A673 (cell line): ENCODE measurements at regions of chr14 and their contacts with region 1.

Region 1: GRCh38 chr14:49633640-49634546 is 1.2 kb downstream of the DNAAF2 start:
- DNase-seq: peak; percentile 98
- H3K4me3 ChIP-seq: peak overlapping the region; percentile 95
- H3K27ac ChIP-seq: peak overlapping the region; percentile 96
- H3K4me1 ChIP-seq: peaks cover 14% of the 10 kb centered on the region
- H3K27me3 ChIP-seq: no peaks in the 10 kb centered on the region
- CTCF ChIP-seq: peak; percentile 99

Region 2: DNA sequence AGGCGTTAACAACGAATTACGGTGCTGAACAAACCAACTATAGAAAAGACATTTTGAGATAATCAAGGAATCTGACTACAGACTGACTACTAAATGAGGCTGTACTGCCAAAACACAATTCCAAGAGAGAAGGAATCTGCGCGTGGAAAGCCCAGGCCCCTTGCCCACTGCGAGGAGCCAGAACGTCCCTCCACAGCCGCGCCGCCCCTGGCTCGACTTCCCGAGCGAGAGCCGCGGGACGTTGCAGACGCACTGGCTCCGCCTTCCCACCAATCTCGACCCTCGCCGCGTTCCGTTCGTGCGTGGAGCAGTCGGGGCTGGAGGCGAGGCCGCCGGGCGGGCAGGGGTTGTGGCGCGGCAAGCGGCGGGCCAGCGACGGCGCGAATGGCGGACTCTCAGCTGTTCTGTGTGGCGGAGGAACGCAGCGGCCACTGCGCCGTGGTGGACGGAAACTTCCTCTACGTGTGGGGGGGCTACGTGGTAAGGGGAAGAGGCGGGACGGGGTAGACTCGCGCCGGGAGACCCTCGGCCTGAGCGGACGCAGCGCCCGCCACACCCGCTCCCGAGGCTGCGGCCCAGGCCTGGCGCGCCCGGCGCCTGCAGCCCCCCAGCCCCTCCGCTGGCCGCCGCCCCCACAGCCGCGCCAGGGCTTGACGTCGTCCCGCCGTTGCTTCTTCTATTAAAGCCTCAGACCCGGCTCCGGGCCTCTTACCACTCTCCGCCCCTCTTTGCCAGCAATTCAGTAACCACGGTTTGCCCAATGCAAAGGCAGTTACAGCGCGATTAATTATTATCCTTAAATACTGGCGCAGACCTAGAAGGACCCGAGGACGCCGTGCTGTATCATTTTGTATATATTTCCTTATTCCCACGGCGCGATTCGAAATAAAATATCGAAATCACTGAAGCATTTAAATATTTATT is 59.2 kb after region 1 on chr14 and contains the start of gene KLHDC1:
- CTCF ChIA-PET with region 1: no interaction called
- POLR2A ChIA-PET with region 1: no interaction called
- intact Hi-C with region 1: loop called (anchors 2 kb)
- DNase-seq: peak; percentile 88
- H3K4me3 ChIP-seq: peak within 1 kb of the TSS; percentile 62
- H3K27ac ChIP-seq: peak within 1 kb of the TSS; percentile 90
- H3K4me1 ChIP-seq: peaks cover 5% of the 10 kb centered on the region
- H3K27me3 ChIP-seq: no peaks in the 10 kb centered on the region
- CTCF ChIP-seq: no peak
- total RNA-seq, gene KLHDC1: 1.3 TPM in 2 replicates

Region 3: GRCh38 chr14:49828640-49829039 is 194.7 kb after region 1 on chr14:
- CTCF ChIA-PET with region 1: interaction called, 3 read pairs
- POLR2A ChIA-PET with region 1: interaction called, 4 read pairs
- intact Hi-C with region 1: loop called (anchors 2 kb)
- DNase-seq: no peak
- H3K4me3 ChIP-seq: no peak overlapping the region
- H3K27ac ChIP-seq: no peak overlapping the region
- H3K4me1 ChIP-seq: no peaks in the 10 kb centered on the region
- H3K27me3 ChIP-seq: no peaks in the 10 kb centered on the region
- CTCF ChIP-seq: no peak

Region 4: DNA sequence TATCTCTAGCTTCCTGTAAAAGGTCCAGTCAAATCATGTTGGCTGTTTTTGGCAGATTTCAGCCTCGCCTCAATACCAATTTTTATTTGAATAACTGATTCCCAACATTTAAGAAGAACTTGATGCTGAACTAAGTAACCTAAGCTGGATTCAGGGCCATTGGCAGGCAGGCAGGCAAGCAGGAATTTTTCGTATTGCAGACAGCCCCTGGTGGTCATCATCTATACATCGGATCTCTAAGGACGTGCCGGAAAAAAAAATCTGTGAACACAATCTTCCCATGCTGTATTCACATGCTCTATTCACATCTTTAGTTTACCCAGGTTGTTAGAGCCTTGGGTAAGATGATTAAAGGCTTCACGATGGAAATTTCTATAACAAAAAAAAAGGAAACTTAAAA is 475.4 kb after region 1 on chr14:
- CTCF ChIA-PET with region 1: interaction called, 7 read pairs
- POLR2A ChIA-PET with region 1: no interaction called
- intact Hi-C with region 1: loop called (anchors 5 kb)
- DNase-seq: peak; percentile 40
- H3K4me3 ChIP-seq: no peak overlapping the region
- H3K27ac ChIP-seq: no peak overlapping the region
- H3K4me1 ChIP-seq: no peaks in the 10 kb centered on the region
- H3K27me3 ChIP-seq: no peaks in the 10 kb centered on the region
- CTCF ChIP-seq: peak; percentile 37